Pancreas (tissue), 10 donors: ENCODE measurements at regions of chr17 and their contacts with region 1.

Region 1: DNA sequence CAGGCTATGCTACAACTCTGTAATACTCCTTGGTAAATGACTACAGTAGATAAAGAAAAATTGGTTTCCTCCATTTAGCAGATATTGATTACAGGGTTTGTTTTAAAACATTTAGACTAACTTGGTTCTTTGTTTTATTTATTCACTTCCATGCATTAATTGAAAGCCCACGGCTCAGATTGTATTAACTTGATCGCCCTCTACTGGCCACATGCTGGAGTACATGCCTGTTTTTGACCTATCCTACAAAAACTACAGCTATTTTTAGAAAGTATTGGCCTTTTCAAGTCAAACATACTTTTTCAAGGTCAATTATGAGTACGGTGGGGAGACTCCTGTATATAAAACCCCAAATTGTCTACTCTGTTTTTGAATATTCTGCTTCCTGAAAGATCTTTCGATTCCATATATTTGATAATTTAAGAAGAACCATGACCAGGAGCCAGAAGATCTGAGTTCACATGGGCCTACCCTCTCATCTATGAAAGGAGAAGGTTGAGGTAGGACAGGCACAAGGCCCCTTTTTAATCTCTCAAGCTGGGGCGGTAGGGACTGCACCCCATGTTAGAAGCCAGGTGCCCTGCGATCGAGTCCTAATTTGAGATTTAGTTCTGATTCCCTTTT is 51.8 kb downstream of the CA10 start:
- DNase-seq: peak in 5 of 6 donors; percentile 7 to 65 (median 46)
- ATAC-seq: peak in 3 of 4 donors; percentile 70 to 74 (median 74)
- H3K4me3 ChIP-seq: no peak overlapping the region
- H3K27ac ChIP-seq: no peak overlapping the region
- H3K4me1 ChIP-seq: no peaks in the 10 kb centered on the region
- H3K27me3 ChIP-seq: peaks cover 0 to 5% (median 0%) of the 10 kb centered on the region in 4 donors
- CTCF ChIP-seq: peak; percentile 43 to 76 (median 71)

Region 2: DNA sequence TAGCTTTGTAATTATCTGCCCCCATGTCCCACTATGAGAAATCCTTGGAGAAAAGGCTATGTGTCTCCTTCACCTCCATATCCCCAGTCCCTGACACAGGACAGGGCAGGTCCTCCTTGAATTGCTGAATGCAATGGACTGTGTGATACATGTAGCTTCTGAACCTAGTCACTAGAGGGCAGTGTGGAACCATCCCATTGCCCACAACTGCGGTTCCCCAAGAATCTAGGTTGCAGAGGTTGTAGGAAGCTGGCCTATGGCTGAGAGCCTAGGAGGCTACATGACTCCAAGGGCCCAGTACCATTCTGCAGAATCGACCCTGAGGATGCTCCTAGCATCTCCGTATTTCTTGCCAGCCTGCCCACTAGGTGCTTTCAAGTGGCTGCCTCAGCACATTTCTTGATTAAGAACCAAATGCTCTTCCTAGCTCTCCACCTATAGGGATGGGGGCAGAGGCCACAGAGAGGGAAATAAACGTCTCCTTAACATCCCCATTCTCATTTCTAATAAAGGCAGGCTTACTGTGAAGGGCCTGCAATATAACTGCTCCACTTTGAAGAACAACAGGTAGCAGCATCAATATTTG is 342.3 kb before region 1 on chr17:
- intact Hi-C with region 1: loop called (anchors 5 to 10 kb)
- DNase-seq: peak in 4 of 6 donors; percentile 18 to 64 (median 36)
- ATAC-seq: peak; percentile 85 to 98 (median 98)
- H3K4me3 ChIP-seq: no peak overlapping the region
- H3K27ac ChIP-seq: no peak overlapping the region
- H3K4me1 ChIP-seq: no peaks in the 10 kb centered on the region
- H3K27me3 ChIP-seq: peaks cover 0 to 4% (median 0%) of the 10 kb centered on the region in 4 donors
- CTCF ChIP-seq: peak; percentile 55 to 86 (median 74)